Right ventricle myocardium inferior (tissue), 1 donor: ENCODE measurements at regions of chr1 and their contacts with region 1.

Region 1: GRCh38 chr1:5745776-5746610 is 246.2 kb downstream of the NPHP4 start:
- DNase-seq: no peak
- ATAC-seq: peak; percentile 80

Region 2: GRCh38 chr1:5637171-5637570 is 108.8 kb before region 1 on chr1:
- intact Hi-C with region 1: loop called (anchors 5 kb)
- DNase-seq: no peak
- ATAC-seq: no peak